Calu3 (cell line): ENCODE measurements at regions of chr10 and their contacts with region 1.

Region 1: DNA sequence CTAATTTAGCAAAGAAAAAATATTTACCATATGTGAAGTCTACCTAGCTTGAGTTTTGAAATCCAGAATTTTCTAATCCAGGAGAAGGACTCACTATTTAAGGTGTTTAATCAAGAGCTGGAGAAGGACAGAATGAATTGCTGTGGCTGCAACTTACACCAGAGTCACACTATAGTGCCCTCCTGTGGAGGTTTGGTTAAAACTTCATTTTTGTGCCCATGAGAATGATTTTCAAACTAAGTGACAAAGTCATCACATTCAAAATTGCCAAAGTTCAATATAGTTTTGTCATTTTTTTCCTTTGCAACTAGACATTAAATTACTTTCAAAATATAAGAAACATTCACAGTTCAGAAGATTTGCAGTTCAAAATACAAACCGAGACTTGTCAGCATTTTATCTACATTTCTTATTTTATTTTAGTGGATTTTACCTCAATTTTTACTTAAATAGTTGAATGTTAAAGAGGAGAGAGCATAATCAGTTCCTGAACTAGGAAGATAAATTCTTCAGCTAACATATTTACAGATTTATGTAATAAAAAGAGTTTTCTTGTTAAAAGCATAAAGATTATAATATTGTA is 70.7 kb downstream of the CABCOCO1 start:
- DNase-seq: peak; percentile 64
- H3K4me3 Mint-ChIP-seq: no peak overlapping the region
- H3K27ac Mint-ChIP-seq: no peak overlapping the region
- H3K4me1 Mint-ChIP-seq: no peaks in the 10 kb centered on the region
- H3K27me3 Mint-ChIP-seq: peaks cover 32% of the 10 kb centered on the region
- CTCF ChIP-seq: no peak

Region 2: GRCh38 chr10:61475449-61475873 is 258.0 kb before region 1 on chr10:
- CTCF ChIA-PET with region 1: no interaction called
- intact Hi-C with region 1: loop called (anchors 2 kb)
- DNase-seq: no peak
- H3K4me3 Mint-ChIP-seq: no peak overlapping the region
- H3K27ac Mint-ChIP-seq: no peak overlapping the region
- H3K4me1 Mint-ChIP-seq: no peaks in the 10 kb centered on the region
- H3K27me3 Mint-ChIP-seq: peaks cover 2% of the 10 kb centered on the region
- CTCF ChIP-seq: no peak

Region 3: GRCh38 chr10:61606951-61607907 is 126.2 kb before region 1 on chr10:
- CTCF ChIA-PET with region 1: no interaction called
- intact Hi-C with region 1: loop called (anchors 5 kb)
- DNase-seq: no peak
- H3K4me3 Mint-ChIP-seq: no peak overlapping the region
- H3K27ac Mint-ChIP-seq: no peak overlapping the region
- H3K4me1 Mint-ChIP-seq: no peaks in the 10 kb centered on the region
- H3K27me3 Mint-ChIP-seq: no peaks in the 10 kb centered on the region
- CTCF ChIP-seq: peak; percentile 45

Region 4: DNA sequence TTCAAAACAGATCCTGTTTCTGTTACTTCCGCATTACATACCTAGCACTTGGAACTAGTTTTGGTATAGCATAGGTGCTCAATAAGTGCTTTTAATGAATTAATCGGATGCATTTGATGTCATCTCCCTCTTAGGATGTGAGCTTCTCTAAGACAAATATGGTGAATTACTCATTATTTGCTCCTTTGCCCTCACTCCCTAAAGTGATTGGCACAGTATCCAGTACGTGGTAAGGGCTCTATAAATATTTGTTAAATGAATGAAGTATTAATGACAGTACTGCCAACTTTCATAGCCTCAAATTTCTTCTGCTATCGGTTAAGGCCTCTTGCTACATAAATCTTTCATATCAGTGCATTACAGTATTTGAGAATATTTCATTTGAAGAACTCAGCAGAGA is 92.2 kb after region 1 on chr10:
- CTCF ChIA-PET with region 1: no interaction called
- intact Hi-C with region 1: no loop called
- DNase-seq: no peak
- H3K4me3 Mint-ChIP-seq: no peak overlapping the region
- H3K27ac Mint-ChIP-seq: no peak overlapping the region
- H3K4me1 Mint-ChIP-seq: peaks cover 25% of the 10 kb centered on the region
- H3K27me3 Mint-ChIP-seq: no peaks in the 10 kb centered on the region
- CTCF ChIP-seq: no peak